Vagina (tissue), 2 donors: ENCODE measurements at regions of chr4 and their contacts with region 1.

Region 1: DNA sequence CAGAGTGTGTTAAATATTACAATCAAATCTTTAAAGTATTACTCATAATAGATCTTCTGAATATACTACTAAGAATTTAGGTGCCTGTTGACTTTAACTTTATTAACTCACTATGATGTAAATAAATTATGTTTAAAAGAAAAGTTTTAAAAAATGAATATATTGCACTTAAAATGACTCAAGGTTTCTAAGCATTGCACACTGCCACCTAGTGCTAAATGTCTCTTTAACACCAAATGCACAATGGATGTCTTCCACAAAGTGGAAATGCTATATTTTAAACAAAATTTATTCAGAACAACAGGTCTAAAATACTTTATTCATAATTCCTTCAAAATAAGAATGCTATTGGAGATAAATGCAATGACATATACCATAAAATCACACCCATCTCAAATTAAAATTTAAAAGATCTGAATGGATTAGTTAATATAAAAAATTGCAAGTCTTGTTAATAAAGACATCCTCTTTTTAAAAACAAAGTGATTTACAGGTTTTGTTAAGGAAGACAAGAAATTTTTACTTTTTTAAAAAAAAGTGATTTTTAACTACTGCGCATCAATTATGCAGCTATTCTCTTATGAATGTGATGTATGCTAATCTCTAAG is 5.5 kb downstream of the INPP4B start:
- DNase-seq: no peak
- H3K4me3 ChIP-seq: no peak overlapping the region
- H3K27ac ChIP-seq: no peak overlapping the region
- H3K4me1 ChIP-seq: no peaks in the 10 kb centered on the region
- H3K27me3 ChIP-seq: no peaks in the 10 kb centered on the region
- CTCF ChIP-seq: peak; percentile 46 to 55 (median 52)
- POLR2A ChIP-seq: no peak

Region 2: DNA sequence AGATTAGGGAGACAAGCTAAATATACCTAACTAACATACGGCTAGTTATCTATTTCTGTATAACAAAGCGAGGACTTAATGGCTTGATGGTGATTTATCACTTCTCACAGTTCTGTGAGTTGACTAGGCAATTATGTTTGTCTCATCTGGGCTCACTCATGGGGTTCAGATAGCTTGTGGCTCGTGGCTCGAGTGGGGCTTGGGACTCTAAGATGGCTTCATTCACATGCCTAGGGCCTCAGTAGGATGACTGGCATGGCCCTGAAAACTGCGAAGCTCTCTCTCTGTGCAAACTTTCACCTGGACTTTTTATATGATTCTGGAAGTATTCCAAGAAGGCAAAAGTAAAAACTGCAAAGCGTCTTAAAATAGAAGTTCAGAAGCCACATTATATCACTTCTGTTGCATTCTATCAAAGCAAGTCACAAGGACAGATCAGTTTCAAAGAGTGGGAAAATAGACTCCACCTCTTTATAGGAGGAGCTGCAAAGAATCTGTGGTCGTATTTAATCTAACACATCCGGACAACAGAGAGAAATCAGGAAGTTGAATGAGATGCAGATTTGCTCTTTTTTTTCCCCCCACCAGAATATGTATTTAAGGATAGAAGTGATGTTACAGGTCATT is 485.7 kb before region 1 on chr4:
- intact Hi-C with region 1: loop called (anchors 5 kb)
- DNase-seq: no peak
- H3K4me3 ChIP-seq: no peak overlapping the region
- H3K27ac ChIP-seq: no peak overlapping the region
- H3K4me1 ChIP-seq: peaks cover 21% of the 10 kb centered on the region
- H3K27me3 ChIP-seq: no peaks in the 10 kb centered on the region
- CTCF ChIP-seq: no peak
- POLR2A ChIP-seq: no peak

Region 3: GRCh38 chr4:143375313-143376073 is 534.9 kb after region 1 on chr4:
- intact Hi-C with region 1: no loop called
- DNase-seq: no peak
- H3K4me3 ChIP-seq: no peak overlapping the region
- H3K27ac ChIP-seq: no peak overlapping the region
- H3K4me1 ChIP-seq: peaks cover 78% of the 10 kb centered on the region
- H3K27me3 ChIP-seq: no peaks in the 10 kb centered on the region
- CTCF ChIP-seq: peak in 1 of 3 experiments; percentile 12
- POLR2A ChIP-seq: no peak